CD8-positive, alpha-beta T cell (primary cell): ENCODE measurements at regions of chr3 and their contacts with region 1.

Region 1: GRCh38 chr3:58491506-58492402 is at the start of gene KCTD6:
- DNase-seq: peak; percentile 74 to 93 (median 85)
- ATAC-seq: peak; percentile 81
- H3K4me3 ChIP-seq: peak within 1 kb of the TSS; percentile 72 to 88
- H3K4me3 Mint-ChIP-seq: peak within 1 kb of the TSS; percentile 93
- H3K27ac ChIP-seq: peak within 1 kb of the TSS; percentile 50 to 54
- H3K27ac Mint-ChIP-seq: peak within 1 kb of the TSS; percentile 91
- H3K4me1 ChIP-seq: peaks cover 45% of the 10 kb centered on the region
- H3K4me1 Mint-ChIP-seq: peaks cover 54% of the 10 kb centered on the region
- H3K27me3 ChIP-seq: no peaks in the 10 kb centered on the region
- H3K27me3 Mint-ChIP-seq: no peaks in the 10 kb centered on the region
- CTCF ChIP-seq: peak; percentile 33
- total RNA-seq, gene KCTD6: 4.2 to 4.5 TPM

Region 2: GRCh38 chr3:58332575-58333188 is 159.1 kb before region 1 on chr3 and contains the start of gene PXK:
- CTCF ChIA-PET with region 1: interaction called, 25 read pairs
- POLR2A ChIA-PET with region 1: interaction called, 20 read pairs
- intact Hi-C with region 1: loop called (anchors 1 kb)
- DNase-seq: peak; percentile 62 to 86 (median 76)
- ATAC-seq: peak; percentile 90
- H3K4me3 ChIP-seq: peak within 1 kb of the TSS; percentile 71 to 78
- H3K4me3 Mint-ChIP-seq: peak within 1 kb of the TSS; percentile 100
- H3K27ac ChIP-seq: peak within 1 kb of the TSS in 1 of 2 experiments; percentile 25
- H3K27ac Mint-ChIP-seq: peak within 1 kb of the TSS; percentile 94
- H3K4me1 ChIP-seq: peaks cover 29% of the 10 kb centered on the region
- H3K4me1 Mint-ChIP-seq: peaks cover 30% of the 10 kb centered on the region
- H3K27me3 ChIP-seq: no peaks in the 10 kb centered on the region
- H3K27me3 Mint-ChIP-seq: no peaks in the 10 kb centered on the region
- CTCF ChIP-seq: no peak
- total RNA-seq, gene PXK: 14.9 to 15.0 TPM

Region 3: DNA sequence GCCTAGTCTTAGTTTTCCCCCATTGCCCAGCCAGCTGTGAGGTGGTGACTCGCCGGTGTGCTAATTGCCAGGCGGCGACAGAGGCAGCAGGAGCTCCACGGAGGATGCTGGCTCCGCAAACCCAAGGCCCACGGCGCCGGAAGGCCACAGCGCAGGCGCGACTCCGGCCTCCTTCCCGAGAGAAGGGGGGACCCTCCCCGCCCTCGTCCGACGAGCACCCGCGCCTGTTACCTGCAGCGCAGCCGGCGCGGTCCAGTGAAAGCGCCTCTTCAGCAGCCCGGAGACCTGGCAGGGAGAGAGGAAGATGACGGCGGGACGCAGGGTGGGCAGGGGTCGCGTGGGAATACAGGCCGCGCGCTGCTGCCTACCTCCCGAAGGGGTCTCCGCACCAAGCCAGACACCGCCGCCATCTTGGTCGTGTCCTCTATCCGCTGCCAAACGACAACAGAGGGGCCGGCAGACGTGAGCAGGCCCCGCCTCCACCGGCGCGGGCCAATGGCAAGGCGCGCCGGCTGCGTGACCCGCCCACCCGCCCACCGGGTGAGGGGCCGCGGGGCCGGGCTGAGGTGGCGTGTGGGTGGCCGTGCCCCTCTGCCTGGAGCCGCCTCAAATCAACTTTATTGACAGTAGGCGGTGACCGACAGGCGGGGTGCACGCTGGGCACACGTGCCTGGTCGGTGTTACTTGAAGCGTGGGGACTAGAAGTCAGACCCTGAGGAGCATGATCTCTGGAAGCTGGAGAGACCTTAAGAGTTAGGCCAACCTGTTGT is 58.2 kb before region 1 on chr3 and contains the start of gene PDHB:
- CTCF ChIA-PET with region 1: interaction called, 3 read pairs
- POLR2A ChIA-PET with region 1: interaction called, 7 read pairs
- intact Hi-C with region 1: loop called (anchors 1 kb)
- DNase-seq: peak; percentile 74 to 94 (median 88)
- ATAC-seq: peak; percentile 97
- H3K4me3 ChIP-seq: peak within 1 kb of the TSS; percentile 88 to 98
- H3K4me3 Mint-ChIP-seq: peak within 1 kb of the TSS; percentile 92
- H3K27ac ChIP-seq: peak within 1 kb of the TSS; percentile 86 to 87
- H3K27ac Mint-ChIP-seq: peak within 1 kb of the TSS; percentile 97
- H3K4me1 ChIP-seq: peaks cover 10% of the 10 kb centered on the region
- H3K4me1 Mint-ChIP-seq: peaks cover 25% of the 10 kb centered on the region
- H3K27me3 ChIP-seq: no peaks in the 10 kb centered on the region
- H3K27me3 Mint-ChIP-seq: no peaks in the 10 kb centered on the region
- CTCF ChIP-seq: no peak
- total RNA-seq, gene PDHB: 32.5 to 33.2 TPM

Region 4: GRCh38 chr3:58463181-58463941 is 28.4 kb before region 1 on chr3:
- CTCF ChIA-PET with region 1: interaction called, 10 read pairs
- POLR2A ChIA-PET with region 1: interaction called, 3 read pairs
- intact Hi-C with region 1: loop called (anchors 1 to 2 kb)
- DNase-seq: peak; percentile 19 to 83 (median 73)
- ATAC-seq: peak; percentile 95
- H3K4me3 ChIP-seq: peak overlapping the region in 1 of 2 experiments; percentile 3
- H3K4me3 Mint-ChIP-seq: peak overlapping the region; percentile 51
- H3K27ac ChIP-seq: no peak overlapping the region
- H3K27ac Mint-ChIP-seq: no peak overlapping the region
- H3K4me1 ChIP-seq: peaks cover 8% of the 10 kb centered on the region
- H3K4me1 Mint-ChIP-seq: peaks cover 8% of the 10 kb centered on the region
- H3K27me3 ChIP-seq: no peaks in the 10 kb centered on the region
- H3K27me3 Mint-ChIP-seq: no peaks in the 10 kb centered on the region
- CTCF ChIP-seq: peak; percentile 80

Region 5: GRCh38 chr3:58471025-58471887 is 20.5 kb before region 1 on chr3:
- CTCF ChIA-PET with region 1: interaction called, 6 read pairs
- POLR2A ChIA-PET with region 1: interaction called, 14 read pairs
- intact Hi-C with region 1: loop called (anchors 1 to 2 kb)
- DNase-seq: peak in 8 of 9 experiments; percentile 18 to 76 (median 46)
- ATAC-seq: peak; percentile 95
- H3K4me3 ChIP-seq: no peak overlapping the region
- H3K4me3 Mint-ChIP-seq: no peak overlapping the region
- H3K27ac ChIP-seq: peak overlapping the region; percentile 18 to 68
- H3K27ac Mint-ChIP-seq: peak overlapping the region; percentile 58
- H3K4me1 ChIP-seq: peaks cover 18% of the 10 kb centered on the region
- H3K4me1 Mint-ChIP-seq: peaks cover 24% of the 10 kb centered on the region
- H3K27me3 ChIP-seq: no peaks in the 10 kb centered on the region
- H3K27me3 Mint-ChIP-seq: no peaks in the 10 kb centered on the region
- CTCF ChIP-seq: no peak